H1 (cell line): ENCODE measurements at regions of chr7 and their contacts with region 1.

Region 1: DNA sequence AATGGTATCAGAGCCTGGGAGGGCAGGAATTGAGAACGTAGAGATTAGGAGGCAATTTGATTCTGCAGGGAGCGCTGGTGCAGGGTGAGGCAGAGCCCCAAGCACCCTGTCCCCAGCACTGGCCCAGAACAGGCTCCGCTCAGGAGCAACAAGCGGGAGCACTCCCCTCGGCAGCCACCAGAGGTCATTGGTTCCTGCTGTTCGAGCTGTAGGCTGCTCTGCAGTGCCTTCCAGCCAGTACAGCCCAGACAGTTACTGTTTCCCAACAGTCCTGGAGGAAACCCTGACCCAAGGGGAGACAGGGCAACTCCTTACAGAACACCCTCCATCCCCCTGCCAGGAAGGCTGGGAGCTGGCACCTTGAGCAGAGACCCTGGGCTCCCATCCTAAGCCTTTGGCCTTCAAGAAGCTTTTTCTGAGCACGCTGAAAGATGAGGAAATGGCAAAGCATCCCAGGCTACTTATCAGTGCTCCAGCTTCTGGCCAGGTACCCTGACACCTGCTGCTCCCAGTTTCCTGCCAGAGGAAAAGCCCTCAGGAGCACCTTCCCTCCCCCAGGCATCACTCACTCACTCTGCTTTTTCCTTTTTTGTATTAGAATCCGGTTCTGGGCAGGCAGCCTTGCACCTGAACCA is 71.2 kb upstream of the EFCAB10 start:
- DNase-seq: peak; percentile 69 to 92
- H3K4me3 ChIP-seq: no peak overlapping the region
- H3K27ac ChIP-seq: no peak overlapping the region; the same call in 1 of the 2 replicates
- H3K4me1 ChIP-seq: peaks cover 33 to 58% (median 36%) of the 10 kb centered on the region in 4 experiments
- H3K27me3 ChIP-seq: no peaks in the 10 kb centered on the region; a peak in 1 of 7 replicates
- CTCF ChIP-seq: peak; percentile 90 to 97 (median 96)
- EP300 ChIP-seq: no peak
- POLR2A ChIP-seq: no peak
- RAD21 ChIP-seq: peak; percentile 90 to 92

Region 2: DNA sequence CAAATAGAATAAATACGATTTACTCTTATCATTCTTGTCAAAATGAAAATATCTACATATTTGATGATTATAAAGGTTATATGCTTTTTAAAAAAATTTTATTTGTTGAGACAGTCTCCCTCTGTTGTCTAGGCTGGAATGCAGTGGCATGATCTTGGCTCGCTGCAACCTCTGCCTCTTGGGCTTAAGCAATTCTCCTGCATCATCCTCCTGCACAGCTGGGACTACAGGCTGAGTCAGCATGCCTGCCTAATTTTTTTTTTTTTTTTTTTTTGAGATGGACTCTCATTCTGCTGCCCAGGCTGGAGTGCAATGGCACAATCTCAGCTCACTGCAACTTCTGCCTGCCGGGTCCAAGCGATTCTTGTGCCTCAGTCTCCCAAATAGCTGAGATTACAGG is 179.3 kb before region 1 on chr7:
- CTCF ChIA-PET with region 1: no interaction called
- POLR2A ChIA-PET with region 1: no interaction called
- DNase-seq: no peak
- H3K4me3 ChIP-seq: no peak overlapping the region
- H3K27ac ChIP-seq: no peak overlapping the region
- H3K4me1 ChIP-seq: no peaks in the 10 kb centered on the region
- H3K27me3 ChIP-seq: no peaks in the 10 kb centered on the region
- CTCF ChIP-seq: no peak
- EP300 ChIP-seq: no peak
- POLR2A ChIP-seq: no peak
- RAD21 ChIP-seq: no peak

Region 3: DNA sequence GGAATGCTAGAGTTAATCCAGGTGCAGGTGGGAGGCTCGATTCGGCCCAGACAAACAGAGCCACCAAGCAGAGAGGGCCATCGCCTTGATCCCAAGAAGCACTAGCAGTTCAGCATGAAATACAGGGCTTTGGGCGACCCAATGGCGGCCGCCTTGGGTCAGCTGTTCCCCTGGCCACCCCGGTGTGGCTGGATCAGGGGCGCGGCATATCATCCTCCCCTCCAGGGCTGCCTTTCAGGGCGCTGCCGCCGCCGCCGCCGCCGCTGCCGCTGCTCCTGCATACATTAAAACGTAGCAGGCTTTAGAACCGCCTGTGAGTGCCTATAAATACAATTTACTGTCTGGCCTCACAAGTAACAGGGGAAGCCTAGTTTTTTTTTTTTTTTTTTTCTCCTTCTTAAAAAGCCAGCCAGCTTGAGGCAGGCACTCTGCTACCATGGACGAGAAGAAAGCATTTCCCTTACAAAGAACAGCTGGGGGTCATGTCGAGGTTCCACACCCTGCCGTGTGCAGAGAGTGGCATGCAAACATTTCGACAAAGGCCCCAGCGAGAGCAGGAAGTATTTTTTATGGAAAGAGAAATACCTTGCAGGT is 13.5 kb before region 1 on chr7:
- CTCF ChIA-PET with region 1: interaction called, 38 read pairs
- POLR2A ChIA-PET with region 1: interaction called, 23 read pairs
- DNase-seq: peak; percentile 80 to 81
- H3K4me3 ChIP-seq: peak overlapping the region; percentile 25 to 67 (median 59); a peak in 7 of 8 replicates
- H3K27ac ChIP-seq: peak overlapping the region; percentile 94
- H3K4me1 ChIP-seq: peaks cover 31 to 65% (median 39%) of the 10 kb centered on the region in 4 experiments
- H3K27me3 ChIP-seq: no peaks in the 10 kb centered on the region
- CTCF ChIP-seq: no peak
- EP300 ChIP-seq: peak in 1 of 2 experiments; percentile 74; a peak in 1 of 3 replicates
- POLR2A ChIP-seq: peak; percentile 17 to 43
- RAD21 ChIP-seq: no peak

Region 4: DNA sequence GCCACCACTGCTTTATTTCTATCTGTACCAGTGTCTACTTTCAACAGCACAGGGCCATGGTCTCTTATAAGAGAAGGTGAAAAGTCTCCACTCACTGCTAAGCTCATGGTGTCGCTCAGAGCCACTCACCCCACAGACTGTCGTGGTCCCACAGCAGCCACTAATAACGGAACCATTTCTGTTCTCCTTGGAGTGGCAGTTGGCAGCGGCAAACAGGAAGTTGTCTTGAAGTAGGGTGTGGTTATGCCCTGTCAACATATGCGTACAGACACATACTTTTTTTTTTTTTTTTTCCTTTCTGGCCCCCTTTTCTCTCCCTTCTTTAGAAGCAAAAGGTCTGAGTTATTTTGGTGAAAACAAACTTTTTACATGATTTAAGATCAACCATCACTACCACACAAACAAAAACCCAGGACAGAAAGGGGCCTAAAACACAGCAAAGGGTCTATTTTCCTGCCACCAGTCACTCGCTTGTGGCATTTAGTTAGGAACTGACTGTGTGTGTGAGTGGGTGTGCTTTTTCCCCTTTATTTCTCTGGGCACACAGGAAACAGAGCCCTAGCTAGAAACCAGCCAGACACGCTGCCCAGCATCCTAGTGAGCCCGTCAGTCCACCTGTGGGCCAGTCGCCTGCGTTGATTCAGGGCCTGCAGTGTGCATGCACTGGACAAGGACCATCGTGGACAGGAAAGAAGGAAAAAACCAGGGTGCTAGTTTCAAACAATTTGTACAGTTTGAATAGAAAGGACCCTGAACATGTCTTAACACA is 25.5 kb after region 1 on chr7:
- CTCF ChIA-PET with region 1: interaction called, 30 read pairs
- POLR2A ChIA-PET with region 1: interaction called, 4 read pairs
- DNase-seq: no peak
- H3K4me3 ChIP-seq: no peak overlapping the region
- H3K27ac ChIP-seq: no peak overlapping the region
- H3K4me1 ChIP-seq: peaks cover 8 to 22% (median 14%) of the 10 kb centered on the region in 4 experiments
- H3K27me3 ChIP-seq: no peaks in the 10 kb centered on the region
- CTCF ChIP-seq: no peak
- EP300 ChIP-seq: no peak
- POLR2A ChIP-seq: no peak
- RAD21 ChIP-seq: no peak

Region 5: GRCh38 chr7:105700793-105701192 is 48.3 kb after region 1 on chr7:
- CTCF ChIA-PET with region 1: interaction called, 12 read pairs
- POLR2A ChIA-PET with region 1: no interaction called
- DNase-seq: no peak
- H3K4me3 ChIP-seq: no peak overlapping the region
- H3K27ac ChIP-seq: no peak overlapping the region
- H3K4me1 ChIP-seq: peaks cover 10 to 21% (median 13%) of the 10 kb centered on the region in 4 experiments
- H3K27me3 ChIP-seq: no peaks in the 10 kb centered on the region
- CTCF ChIP-seq: no peak
- EP300 ChIP-seq: no peak
- POLR2A ChIP-seq: no peak
- RAD21 ChIP-seq: no peak

Region 6: DNA sequence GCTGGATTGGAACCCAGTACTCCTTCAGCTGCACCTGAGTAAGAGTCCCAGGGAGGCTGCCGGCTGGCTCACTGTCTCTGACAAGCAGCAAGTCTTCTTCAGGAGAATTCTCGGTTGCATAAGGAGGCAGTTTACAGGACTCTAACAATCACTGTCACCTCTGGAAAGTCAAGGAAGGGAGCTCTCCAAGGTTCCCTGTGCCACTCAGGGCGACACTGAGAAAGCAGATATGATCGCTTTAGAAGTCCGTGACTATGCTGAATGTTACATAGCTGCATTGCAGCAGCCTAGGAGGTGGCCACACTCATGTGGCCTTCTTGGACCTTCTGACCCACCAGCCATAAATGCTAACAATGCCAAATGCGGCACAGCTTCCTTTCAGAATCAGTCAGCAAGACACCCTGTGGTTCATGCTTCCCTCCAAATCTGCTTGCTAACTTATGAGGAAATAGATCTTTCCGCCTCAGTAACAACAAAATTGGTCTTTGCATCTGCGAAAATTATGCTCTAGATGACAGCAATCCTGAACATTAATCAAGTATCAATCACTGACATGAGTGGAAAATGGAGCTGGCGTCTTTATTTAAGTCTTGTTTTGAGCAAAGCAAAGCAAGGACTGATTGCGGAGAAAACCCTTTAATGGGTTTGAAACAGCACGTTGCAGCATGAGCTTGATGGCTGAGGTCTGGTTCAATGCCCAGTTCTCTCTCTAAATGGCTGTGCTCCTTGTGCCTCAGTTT is 91.0 kb after region 1 on chr7:
- CTCF ChIA-PET with region 1: interaction called, 78 read pairs
- POLR2A ChIA-PET with region 1: no interaction called
- DNase-seq: no peak
- H3K4me3 ChIP-seq: no peak overlapping the region
- H3K27ac ChIP-seq: no peak overlapping the region
- H3K4me1 ChIP-seq: peaks cover 0 to 13% (median 6%) of the 10 kb centered on the region in 4 experiments; a peak in 5 of 7 replicates
- H3K27me3 ChIP-seq: no peaks in the 10 kb centered on the region
- CTCF ChIP-seq: no peak
- EP300 ChIP-seq: no peak
- POLR2A ChIP-seq: no peak
- RAD21 ChIP-seq: no peak

Region 7: DNA sequence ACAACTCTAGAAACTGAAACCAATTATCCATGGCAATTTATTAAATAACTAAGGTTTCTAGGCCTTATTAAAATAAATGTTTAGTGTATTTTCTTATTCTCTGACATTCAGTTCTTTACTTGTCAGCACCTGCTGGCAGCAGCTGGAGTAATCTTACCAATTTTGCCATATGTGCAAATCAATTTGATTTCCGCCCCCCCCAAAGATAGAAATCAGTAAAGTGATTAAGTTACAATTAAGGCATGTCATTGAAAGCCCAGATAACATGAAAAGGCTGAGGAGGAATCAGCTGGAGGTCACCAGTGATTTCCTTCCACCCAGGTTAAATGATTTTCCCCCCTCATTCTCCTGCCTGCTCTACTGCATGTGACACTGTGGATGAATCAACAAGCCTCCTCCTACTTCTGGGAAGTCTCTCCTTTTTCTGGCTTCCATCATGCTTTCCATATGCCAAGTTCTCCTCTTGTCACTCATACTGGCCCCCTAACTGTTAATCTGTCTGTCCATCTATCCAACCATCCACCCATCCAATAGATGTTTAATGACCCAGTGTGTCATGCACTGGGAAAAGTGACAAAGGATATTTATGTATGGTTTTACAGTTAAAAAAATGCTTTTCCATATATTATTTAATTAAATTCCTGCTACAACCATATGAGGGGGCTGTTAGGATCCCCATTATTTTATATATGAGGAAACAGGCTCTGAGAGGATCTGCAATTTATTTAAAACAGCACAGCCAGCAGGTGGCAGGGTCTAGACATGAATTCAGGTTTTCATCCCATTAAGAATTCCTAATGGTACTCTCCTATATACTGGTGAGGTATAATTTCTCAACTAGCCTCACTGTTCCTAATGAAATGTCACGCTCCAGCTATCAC is 107.4 kb after region 1 on chr7:
- CTCF ChIA-PET with region 1: interaction called, 158 read pairs
- POLR2A ChIA-PET with region 1: no interaction called
- DNase-seq: no peak
- H3K4me3 ChIP-seq: no peak overlapping the region
- H3K27ac ChIP-seq: no peak overlapping the region
- H3K4me1 ChIP-seq: peaks cover 1 to 13% (median 4%) of the 10 kb centered on the region in 4 experiments; a peak in 4 of 7 replicates
- H3K27me3 ChIP-seq: no peaks in the 10 kb centered on the region
- CTCF ChIP-seq: peak in 2 of 3 experiments; percentile 45 to 47; a peak in 2 of 4 replicates
- EP300 ChIP-seq: no peak
- POLR2A ChIP-seq: no peak
- RAD21 ChIP-seq: peak; percentile 65 to 69

Region 8: GRCh38 chr7:105876091-105876963 is 223.9 kb after region 1 on chr7 and contains the start of gene ATXN7L1:
- CTCF ChIA-PET with region 1: interaction called, 14 read pairs
- POLR2A ChIA-PET with region 1: no interaction called
- DNase-seq: peak; percentile 90 to 96
- H3K4me3 ChIP-seq: peak within 1 kb of the TSS; percentile 87 to 93 (median 90)
- H3K27ac ChIP-seq: peak within 1 kb of the TSS; percentile 91
- H3K4me1 ChIP-seq: peaks cover 6 to 27% (median 15%) of the 10 kb centered on the region in 4 experiments; a peak in 5 of 7 replicates
- H3K27me3 ChIP-seq: peaks cover 0 to 14% (median 12%) of the 10 kb centered on the region in 4 experiments; a peak in 5 of 7 replicates
- CTCF ChIP-seq: peak; percentile 50 to 57 (median 55); a peak in 3 of 4 replicates
- EP300 ChIP-seq: no peak
- POLR2A ChIP-seq: peak; percentile 79 to 89
- RAD21 ChIP-seq: peak; percentile 1 to 46; a peak in 2 of 4 replicates
- total RNA-seq, gene ATXN7L1: 34.0 and 34.5 TPM in 2 replicates